Ascending aorta (tissue), 2 donors: ENCODE measurements at regions of chr12 and their contacts with region 1.

Region 1: GRCh38 chr12:54359033-54359761 is 5.1 kb downstream of the GPR84 start:
- DNase-seq: peak; percentile 96 to 99
- H3K4me3 ChIP-seq: peak overlapping the region; percentile 59 to 74
- H3K27ac ChIP-seq: peak overlapping the region; percentile 78 to 80
- H3K4me1 ChIP-seq: peaks cover 0 to 15% of the 10 kb centered on the region in 2 donors
- H3K27me3 ChIP-seq: no peaks in the 10 kb centered on the region
- CTCF ChIP-seq: no peak

Region 2: GRCh38 chr12:54220092-54220557 is 139.1 kb before region 1 on chr12:
- intact Hi-C with region 1: loop called (anchors 5 kb)
- DNase-seq: peak in 1 of 2 donors; percentile 72
- H3K4me3 ChIP-seq: no peak overlapping the region
- H3K27ac ChIP-seq: no peak overlapping the region
- H3K4me1 ChIP-seq: peaks cover 7 to 10% of the 10 kb centered on the region in 2 donors
- H3K27me3 ChIP-seq: no peaks in the 10 kb centered on the region
- CTCF ChIP-seq: peak; percentile 78 to 85 (median 82)

Region 3: DNA sequence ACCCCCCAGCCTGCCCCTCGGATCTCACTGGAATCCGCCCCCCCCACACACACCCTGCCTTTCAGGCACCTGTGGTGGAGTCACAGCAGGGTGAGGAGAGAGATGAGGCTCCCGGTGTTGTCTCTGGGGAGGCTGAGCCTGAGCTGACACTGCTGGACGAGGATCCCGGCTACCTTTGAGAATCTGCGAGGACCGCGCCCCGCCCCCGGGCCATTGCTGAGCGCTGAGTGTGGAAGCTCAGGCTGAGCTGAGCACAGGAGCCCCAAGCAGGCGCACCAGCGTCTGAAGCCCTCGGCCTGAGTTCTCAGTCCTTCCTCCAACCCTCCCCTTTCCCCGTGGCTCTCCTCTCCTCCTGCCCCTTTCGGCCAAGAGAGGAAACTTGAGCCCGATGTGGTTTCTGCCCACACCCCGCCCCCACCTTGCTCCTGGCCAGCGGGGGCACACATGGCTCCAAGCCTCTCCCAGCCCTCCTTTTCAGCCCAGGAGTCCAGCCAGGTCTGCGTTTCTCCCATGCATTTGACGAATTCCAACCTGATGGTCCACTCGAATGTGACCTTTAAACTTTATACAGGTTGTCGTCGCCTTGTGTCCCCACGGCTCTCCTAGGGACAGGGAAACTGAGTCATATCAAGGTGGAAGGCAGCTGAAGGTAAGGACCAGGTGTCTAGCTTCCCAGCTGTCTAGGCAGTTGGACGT is 58.3 kb before region 1 on chr12 and contains the start of gene NFE2:
- intact Hi-C with region 1: no loop called
- DNase-seq: peak in 1 of 2 donors; percentile 71
- H3K4me3 ChIP-seq: peak within 1 kb of the TSS; percentile 21 to 49
- H3K27ac ChIP-seq: no peak within 1 kb of the TSS
- H3K4me1 ChIP-seq: peaks cover 0 to 5% of the 10 kb centered on the region in 2 donors
- H3K27me3 ChIP-seq: no peaks in the 10 kb centered on the region
- CTCF ChIP-seq: no peak
- total RNA-seq, gene NFE2: not detected

Region 4: DNA sequence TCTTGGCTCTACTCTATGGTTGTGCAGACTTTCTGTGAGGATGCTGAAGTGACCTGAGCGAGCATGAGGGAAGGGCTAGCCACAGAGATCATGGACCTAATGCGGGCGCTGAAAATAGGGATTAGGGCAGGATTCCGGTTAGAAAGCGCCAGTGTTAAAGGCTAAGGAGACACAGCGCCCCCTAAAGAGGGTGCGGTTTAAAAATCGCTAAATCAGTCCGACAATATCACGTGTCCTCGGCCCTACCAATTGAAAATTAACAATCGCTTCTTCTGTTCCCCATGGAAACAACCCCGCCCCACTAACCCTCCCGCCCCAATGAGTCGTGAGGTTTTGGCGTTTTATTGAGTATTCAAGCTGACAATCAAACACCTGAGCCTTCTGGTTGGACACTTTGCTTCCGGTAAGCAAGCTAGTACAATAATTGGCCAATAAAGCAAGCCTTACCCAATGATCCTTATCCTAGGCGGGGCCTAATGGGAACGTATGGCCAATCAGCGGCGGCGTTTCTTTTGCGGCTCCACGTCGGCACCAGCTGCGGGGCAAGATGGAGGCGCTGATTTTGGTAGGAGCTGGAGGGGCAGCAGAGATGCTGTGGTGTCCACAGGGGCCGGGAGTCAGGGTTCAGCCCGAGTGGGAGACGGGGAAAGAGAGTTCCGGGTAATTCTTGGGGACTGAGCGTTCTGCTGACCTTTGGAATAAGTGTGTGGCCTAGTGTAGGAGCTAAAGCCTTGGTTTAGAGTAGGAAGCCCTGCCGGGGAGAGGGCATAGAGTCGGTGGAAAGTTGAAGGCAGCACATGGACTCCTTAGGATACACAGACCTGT is 34.4 kb before region 1 on chr12 and contains the start of gene COPZ1:
- intact Hi-C with region 1: loop called (anchors 1 kb)
- DNase-seq: peak; percentile 97 to 99
- H3K4me3 ChIP-seq: peak within 1 kb of the TSS; percentile 64 to 65
- H3K27ac ChIP-seq: peak within 1 kb of the TSS; percentile 64 to 78
- H3K4me1 ChIP-seq: peaks cover 6 to 26% of the 10 kb centered on the region in 2 donors
- H3K27me3 ChIP-seq: no peaks in the 10 kb centered on the region
- CTCF ChIP-seq: peak; percentile 61 to 72 (median 67)
- total RNA-seq, gene COPZ1: 60.3 TPM